IMR-90 (cell line): ENCODE measurements at regions of chr11 and their contacts with region 1.

Region 1: DNA sequence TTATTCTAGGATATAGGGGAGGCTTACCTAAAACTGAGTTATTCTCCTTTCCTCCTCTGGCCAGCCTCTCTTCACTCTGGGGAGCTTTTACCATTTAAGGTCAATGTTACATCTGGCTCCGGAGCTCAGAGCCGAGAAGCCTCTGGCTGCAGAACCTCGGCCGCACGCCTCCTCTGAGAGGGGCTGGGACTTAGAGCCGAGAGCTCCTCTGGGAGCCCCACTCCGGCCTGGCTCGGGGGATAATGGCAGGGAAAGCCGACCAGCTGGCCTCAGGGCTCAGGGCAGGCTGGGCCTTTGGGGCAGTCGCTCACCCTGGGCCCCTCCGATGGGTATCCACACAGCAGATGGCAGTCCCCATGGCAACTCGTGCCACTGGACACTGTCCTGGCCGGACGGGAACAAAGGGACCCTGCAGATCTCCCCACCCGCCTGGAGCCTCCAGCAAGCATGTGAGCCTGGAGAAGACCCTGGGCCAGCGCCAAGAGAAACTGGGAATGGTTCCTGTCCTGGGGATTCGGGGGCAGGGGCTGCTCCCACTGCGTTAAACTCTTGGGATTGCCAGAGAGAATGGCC is at the start of gene IRAG1:
- DNase-seq: peak; percentile 78
- ATAC-seq: peak; percentile 81
- H3K4me3 ChIP-seq: peak within 1 kb of the TSS; percentile 61
- H3K27ac ChIP-seq: peak within 1 kb of the TSS; percentile 98
- H3K4me1 ChIP-seq: peaks cover 46% of the 10 kb centered on the region
- H3K27me3 ChIP-seq: no peaks in the 10 kb centered on the region
- CTCF ChIP-seq: no peak
- POLR2A ChIP-seq: 0 out of 2 replicates have a peak, but pooled peaks have one; percentile 19
- RAD21 ChIP-seq: no peak
- total RNA-seq, gene IRAG1: 21.1 and 25.8 TPM in 2 replicates

Region 2: GRCh38 chr11:10666556-10667523 is 26.8 kb before region 1 on chr11:
- CTCF ChIA-PET with region 1: no interaction called
- POLR2A ChIA-PET with region 1: interaction called, 10 read pairs
- dilution Hi-C with region 1: no loop called
- in situ Hi-C with region 1: no loop called
- intact Hi-C with region 1: no loop called
- DNase-seq: peak; percentile 74
- ATAC-seq: peak; percentile 69
- H3K4me3 ChIP-seq: no peak overlapping the region
- H3K27ac ChIP-seq: peak overlapping the region; percentile 89
- H3K4me1 ChIP-seq: peaks cover 30% of the 10 kb centered on the region
- H3K27me3 ChIP-seq: no peaks in the 10 kb centered on the region
- CTCF ChIP-seq: no peak
- POLR2A ChIP-seq: no peak
- RAD21 ChIP-seq: no peak

Region 3: DNA sequence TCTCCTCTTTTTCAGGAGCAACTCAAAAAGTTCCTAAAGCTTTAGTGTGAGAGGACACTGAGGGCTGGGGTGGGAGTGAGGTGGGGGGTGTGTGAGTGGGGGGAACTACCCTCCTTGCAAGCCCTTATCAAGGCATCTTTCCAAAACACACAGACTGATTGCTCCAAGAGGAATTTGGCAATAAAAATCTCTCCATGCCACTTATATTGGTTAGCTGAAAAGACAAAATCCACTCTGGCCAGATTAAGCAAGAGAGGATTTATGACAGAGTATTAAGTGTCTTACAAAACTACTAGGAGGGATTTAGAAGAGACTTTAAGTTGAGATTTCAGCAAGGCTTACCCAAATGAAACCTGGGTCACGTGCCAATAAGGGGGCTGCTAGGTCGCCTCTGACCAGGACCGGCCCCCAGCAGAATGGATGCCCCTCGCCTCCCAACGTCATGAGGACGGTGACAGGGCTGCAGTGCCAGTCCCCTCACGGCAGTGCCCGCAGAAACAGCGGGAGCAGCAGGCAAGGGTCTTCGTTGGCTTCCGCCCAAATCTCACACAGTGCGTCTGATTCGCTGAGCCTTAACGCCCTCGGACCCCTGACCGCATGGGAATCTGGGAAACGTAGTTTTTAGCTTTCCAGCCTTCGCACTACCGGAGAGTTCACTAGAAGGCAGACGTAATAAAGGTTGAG is 35.3 kb after region 1 on chr11:
- CTCF ChIA-PET with region 1: interaction called, 9 read pairs
- POLR2A ChIA-PET with region 1: interaction called, 15 read pairs
- dilution Hi-C with region 1: no loop called
- in situ Hi-C with region 1: no loop called
- intact Hi-C with region 1: loop called (anchors 2 kb)
- DNase-seq: peak; percentile 35
- ATAC-seq: no peak
- H3K4me3 ChIP-seq: no peak overlapping the region
- H3K27ac ChIP-seq: peak overlapping the region; percentile 90; the same call in 1 of the 2 replicates
- H3K4me1 ChIP-seq: peaks cover 18% of the 10 kb centered on the region
- H3K27me3 ChIP-seq: no peaks in the 10 kb centered on the region
- CTCF ChIP-seq: no peak
- POLR2A ChIP-seq: no peak
- RAD21 ChIP-seq: no peak